PC-3 (cell line): ENCODE measurements at regions of chr5 and their contacts with region 1.

Region 1: DNA sequence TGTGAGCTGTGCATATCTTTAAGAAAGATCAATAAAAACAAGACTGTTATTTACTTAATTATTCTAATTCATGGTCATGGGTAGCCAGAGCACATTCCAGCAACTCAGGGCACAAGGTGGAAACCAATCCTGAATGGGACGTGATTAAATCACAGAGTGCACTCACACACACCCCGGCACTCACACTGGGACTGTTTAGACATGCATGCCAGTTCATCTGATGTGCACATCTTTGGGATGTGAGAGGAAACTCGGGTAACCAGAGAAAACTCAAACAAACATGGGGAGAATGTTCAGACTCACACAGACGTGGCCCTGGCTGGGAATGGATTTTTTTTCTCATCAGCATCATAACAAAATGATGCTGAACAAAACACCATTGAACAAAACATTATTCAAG is 29.4 kb downstream of the SMAD5 start:
- DNase-seq: no peak
- ATAC-seq: no peak
- H3K4me3 ChIP-seq: no peak overlapping the region
- H3K27ac ChIP-seq: no peak overlapping the region
- H3K4me1 ChIP-seq: no peaks in the 10 kb centered on the region
- H3K27me3 ChIP-seq: no peaks in the 10 kb centered on the region
- CTCF ChIP-seq: no peak

Region 2: DNA sequence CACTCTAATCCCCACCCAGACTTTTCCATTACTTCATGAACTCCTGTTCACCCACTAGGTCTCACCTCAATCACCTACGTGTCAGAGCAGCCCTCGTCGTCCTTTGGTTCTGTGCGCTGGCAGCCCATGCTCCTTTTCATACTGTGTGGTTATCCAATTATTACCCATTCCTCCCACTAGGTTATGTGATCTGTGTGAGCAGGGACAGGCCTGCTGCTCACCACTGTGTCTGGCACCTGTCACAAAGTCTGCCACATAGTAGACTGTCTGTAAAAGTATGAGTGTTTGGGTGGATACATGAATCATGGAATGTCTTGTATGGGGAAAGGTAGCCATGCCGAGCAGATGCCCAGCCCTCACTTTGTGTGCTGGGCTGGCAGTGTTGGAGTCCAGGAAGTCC is 41.5 kb before region 1 on chr5:
- CTCF ChIA-PET with region 1: no interaction called
- POLR2A ChIA-PET with region 1: no interaction called
- intact Hi-C with region 1: no loop called
- DNase-seq: no peak
- ATAC-seq: no peak
- H3K4me3 ChIP-seq: no peak overlapping the region
- H3K27ac ChIP-seq: no peak overlapping the region
- H3K4me1 ChIP-seq: peaks cover 29% of the 10 kb centered on the region
- H3K27me3 ChIP-seq: no peaks in the 10 kb centered on the region
- CTCF ChIP-seq: no peak

Region 3: DNA sequence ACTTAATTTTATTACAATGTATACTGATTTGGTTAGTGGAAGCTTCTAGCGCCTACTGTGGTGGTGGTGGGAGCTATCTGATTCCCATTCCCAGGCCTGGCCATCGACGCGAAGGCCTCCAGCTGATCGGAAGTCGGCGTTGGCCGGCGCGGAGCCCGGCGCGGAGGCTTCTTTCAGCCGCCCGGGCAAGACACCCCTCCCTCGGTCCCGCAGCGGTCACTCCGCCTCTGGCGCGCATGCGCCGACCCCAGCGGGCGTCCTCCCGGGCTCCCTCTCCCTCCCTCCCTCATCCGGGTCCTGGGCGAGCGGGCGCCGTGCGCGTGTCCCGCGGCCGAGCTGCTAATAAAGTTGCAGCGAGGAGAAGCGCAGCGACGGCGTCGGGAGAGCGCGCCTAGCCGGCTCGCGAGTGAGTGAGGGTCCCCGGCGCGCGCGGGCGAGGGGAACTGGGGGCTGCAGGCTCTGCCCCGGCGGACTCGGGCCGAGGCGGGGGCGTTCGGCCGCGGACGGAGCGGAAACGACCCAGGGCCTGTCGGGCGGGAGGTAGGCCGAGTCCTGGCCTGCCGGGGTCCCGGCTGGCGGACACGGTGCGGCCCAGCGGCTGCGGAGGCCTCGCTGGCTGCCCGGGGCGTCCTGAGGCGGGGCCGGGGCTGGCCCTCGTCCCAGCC is 29.3 kb before region 1 on chr5 and contains the start of gene SMAD5:
- CTCF ChIA-PET with region 1: no interaction called
- POLR2A ChIA-PET with region 1: no interaction called
- intact Hi-C with region 1: loop called (anchors 2 kb)
- DNase-seq: peak; percentile 89
- ATAC-seq: peak; percentile 84
- H3K4me3 ChIP-seq: peak within 1 kb of the TSS; percentile 81
- H3K27ac ChIP-seq: peak within 1 kb of the TSS; percentile 57
- H3K4me1 ChIP-seq: peaks cover 25% of the 10 kb centered on the region
- H3K27me3 ChIP-seq: no peaks in the 10 kb centered on the region
- CTCF ChIP-seq: no peak
- total RNA-seq, gene SMAD5: 19.8 and 28.5 TPM in 2 replicates

Region 4: DNA sequence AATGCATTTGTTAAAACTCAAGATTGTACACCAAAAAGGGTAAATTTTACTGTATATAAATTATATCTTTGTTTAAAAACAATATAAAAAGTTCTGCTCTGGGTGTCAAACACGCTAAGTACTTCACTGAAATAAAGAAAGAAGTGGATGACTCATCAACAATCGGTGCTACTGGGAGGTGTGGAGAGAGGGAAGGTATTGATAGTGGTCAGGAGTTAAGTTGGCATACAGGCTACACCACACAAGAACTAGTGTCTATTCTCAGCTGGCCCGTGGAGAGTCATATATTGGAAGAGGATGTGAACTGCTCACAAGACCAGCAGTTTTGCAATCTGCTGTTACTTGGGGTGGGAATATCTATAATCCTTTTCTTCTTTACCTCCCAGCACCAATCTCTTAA is 349.0 kb after region 1 on chr5:
- CTCF ChIA-PET with region 1: no interaction called
- POLR2A ChIA-PET with region 1: no interaction called
- intact Hi-C with region 1: no loop called
- DNase-seq: no peak
- ATAC-seq: no peak
- H3K4me3 ChIP-seq: no peak overlapping the region
- H3K27ac ChIP-seq: no peak overlapping the region
- H3K4me1 ChIP-seq: no peaks in the 10 kb centered on the region
- H3K27me3 ChIP-seq: no peaks in the 10 kb centered on the region
- CTCF ChIP-seq: no peak

Region 5: DNA sequence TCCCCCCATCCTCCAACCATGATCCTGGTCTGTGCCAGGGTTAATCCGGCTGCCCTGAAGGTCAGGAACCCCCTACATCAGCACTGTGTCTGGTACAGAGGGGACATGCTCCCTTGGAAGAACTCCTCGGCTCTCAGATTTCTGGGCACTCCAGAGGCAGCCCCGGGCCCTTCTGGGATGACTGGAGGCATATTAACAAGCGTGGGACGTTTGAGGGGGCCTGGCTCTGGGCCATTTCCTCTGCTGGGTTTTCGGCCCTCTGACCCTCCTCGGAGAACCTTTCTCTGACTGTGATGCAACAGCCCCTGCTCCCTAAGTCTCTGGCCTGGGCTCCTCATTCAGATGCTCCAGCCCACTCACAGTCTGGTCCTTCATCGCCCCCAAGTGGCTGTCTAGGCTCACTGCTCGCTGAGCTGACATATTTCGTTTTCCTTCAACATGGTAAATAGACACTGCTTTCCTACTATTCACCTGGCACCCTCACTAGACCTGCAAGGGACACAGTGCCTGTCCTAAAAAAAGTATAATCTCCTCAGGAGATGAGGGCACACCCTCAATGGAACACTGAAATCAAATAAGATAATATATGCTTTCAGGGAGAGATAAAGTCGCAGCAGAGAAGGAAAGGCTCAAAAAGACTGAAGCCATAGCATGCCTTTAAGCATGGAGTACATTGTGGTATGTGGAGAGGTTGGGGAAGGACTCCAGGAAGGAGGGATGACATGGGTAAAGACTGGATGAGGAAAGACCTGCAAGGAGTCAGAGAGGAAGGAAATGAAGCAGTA is 608.1 kb after region 1 on chr5:
- CTCF ChIA-PET with region 1: no interaction called
- POLR2A ChIA-PET with region 1: no interaction called
- intact Hi-C with region 1: no loop called
- DNase-seq: peak; percentile 79
- ATAC-seq: peak; percentile 77
- H3K4me3 ChIP-seq: no peak overlapping the region
- H3K27ac ChIP-seq: no peak overlapping the region
- H3K4me1 ChIP-seq: no peaks in the 10 kb centered on the region
- H3K27me3 ChIP-seq: no peaks in the 10 kb centered on the region
- CTCF ChIP-seq: peak; percentile 84